Psoas muscle (tissue), 8 donors: ENCODE measurements at regions of chr17 and their contacts with region 1.

Region 1: DNA sequence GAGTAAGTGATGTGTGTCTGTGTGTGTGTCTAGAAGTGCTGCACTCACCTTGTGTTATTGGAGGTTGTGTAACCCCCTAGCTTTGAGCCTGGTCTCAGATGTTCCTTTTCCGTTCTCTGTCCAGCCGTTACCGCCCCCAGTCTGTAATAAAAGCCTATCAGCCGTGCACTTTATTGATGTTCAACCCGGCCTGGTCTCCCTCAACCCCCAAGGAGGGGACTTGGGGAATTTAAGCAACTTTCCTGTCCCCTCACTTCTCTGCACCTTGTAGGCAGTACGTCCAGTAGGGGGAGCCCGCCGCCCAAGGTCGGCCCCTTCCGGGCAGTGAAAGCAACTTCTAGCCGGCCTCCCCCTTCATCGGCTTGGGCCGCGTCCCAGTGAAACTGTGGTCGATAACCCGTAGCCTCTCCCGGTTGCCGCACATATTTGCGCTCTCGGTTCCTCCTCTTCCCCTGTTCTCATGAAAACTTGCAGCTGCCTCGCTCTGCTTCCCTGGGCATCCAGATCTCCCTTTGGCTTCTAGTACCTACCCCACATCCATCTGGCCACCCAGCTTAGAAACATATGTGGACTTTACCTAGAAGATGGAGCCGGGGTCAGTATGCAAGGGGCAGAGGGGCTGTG is 7.9 kb downstream of the PNPO start:
- DNase-seq: peak; percentile 89 to 91
- ATAC-seq: peak; percentile 70 to 83 (median 74)
- H3K4me3 ChIP-seq: peak overlapping the region; percentile 16
- H3K27ac ChIP-seq: peak overlapping the region; percentile 71
- H3K4me1 ChIP-seq: peaks cover 21% of the 10 kb centered on the region
- H3K27me3 ChIP-seq: no peaks in the 10 kb centered on the region
- CTCF ChIP-seq: peak; percentile 90

Region 2: GRCh38 chr17:47831003-47831933 is 118.0 kb before region 1 on chr17 and contains the starts of genes LRRC46 and MRPL10:
- intact Hi-C with region 1: loop called in 1 of 2 experiments (anchors 5 kb)
- DNase-seq: peak; percentile 91 to 96
- ATAC-seq: peak; percentile 97 to 99 (median 98)
- H3K4me3 ChIP-seq: peak within 1 kb of the TSS; percentile 93
- H3K27ac ChIP-seq: peak within 1 kb of the TSS; percentile 76
- H3K4me1 ChIP-seq: peaks cover 23% of the 10 kb centered on the region
- H3K27me3 ChIP-seq: no peaks in the 10 kb centered on the region
- CTCF ChIP-seq: no peak
- total RNA-seq, gene LRRC46: 0.15 to 0.54 TPM in 2 of 4 donors, not detected in the others
- total RNA-seq, gene MRPL10: 37.8 to 51.9 (median 46.3) TPM

Region 3: DNA sequence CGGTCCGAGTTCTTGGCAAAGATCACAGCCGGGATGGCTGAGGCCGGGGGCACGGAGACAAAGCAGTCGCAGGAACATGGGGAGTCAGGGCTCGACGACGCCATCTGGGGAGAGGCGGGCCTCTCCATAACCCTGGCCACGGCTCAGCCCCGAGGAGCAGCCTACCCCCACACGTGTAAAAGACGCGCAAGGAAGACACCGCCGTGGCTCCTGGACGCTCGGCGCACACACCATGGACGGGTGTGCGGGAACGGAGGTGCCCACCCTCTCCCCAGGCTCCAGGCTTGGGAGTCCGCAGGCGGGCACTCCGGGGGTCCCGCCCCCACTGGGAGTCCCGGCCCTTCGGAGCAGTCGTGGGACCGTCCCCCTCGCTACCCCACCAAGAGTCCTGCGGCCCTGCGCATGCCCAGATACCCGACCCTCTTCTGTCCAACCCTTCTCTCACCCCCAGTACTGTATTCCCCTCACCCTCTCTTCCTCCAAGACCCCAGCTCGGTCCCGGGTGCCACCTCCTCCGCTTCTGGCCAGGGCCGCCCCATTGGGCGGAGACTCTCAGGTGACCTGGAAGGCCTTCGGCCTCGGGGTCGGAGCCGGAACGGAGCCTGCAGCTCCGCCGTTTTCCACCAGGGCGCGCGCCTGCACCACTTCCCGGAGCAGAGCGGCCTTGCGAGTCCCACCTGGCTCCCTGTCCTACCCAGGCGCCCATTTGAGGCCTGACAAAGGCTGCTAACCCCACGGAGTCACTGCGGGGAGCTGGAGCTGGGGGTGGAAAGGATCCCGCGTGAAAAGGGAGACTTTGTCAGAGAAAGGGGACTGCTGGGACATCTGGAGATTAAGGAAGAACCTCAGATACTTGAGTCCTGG is 108.3 kb before region 1 on chr17 and contains the start of gene SCRN2:
- intact Hi-C with region 1: loop called in 1 of 2 experiments (anchors 2 kb)
- DNase-seq: peak; percentile 89 to 96
- ATAC-seq: peak; percentile 96 to 99 (median 98)
- H3K4me3 ChIP-seq: peak within 1 kb of the TSS; percentile 77
- H3K27ac ChIP-seq: peak within 1 kb of the TSS; percentile 65
- H3K4me1 ChIP-seq: peaks cover 13% of the 10 kb centered on the region
- H3K27me3 ChIP-seq: peaks cover 0 to 7% (median 0%) of the 10 kb centered on the region in 3 donors
- CTCF ChIP-seq: peak; percentile 96
- total RNA-seq, gene SCRN2: 12.2 to 33.5 (median 19.5) TPM

Region 4: DNA sequence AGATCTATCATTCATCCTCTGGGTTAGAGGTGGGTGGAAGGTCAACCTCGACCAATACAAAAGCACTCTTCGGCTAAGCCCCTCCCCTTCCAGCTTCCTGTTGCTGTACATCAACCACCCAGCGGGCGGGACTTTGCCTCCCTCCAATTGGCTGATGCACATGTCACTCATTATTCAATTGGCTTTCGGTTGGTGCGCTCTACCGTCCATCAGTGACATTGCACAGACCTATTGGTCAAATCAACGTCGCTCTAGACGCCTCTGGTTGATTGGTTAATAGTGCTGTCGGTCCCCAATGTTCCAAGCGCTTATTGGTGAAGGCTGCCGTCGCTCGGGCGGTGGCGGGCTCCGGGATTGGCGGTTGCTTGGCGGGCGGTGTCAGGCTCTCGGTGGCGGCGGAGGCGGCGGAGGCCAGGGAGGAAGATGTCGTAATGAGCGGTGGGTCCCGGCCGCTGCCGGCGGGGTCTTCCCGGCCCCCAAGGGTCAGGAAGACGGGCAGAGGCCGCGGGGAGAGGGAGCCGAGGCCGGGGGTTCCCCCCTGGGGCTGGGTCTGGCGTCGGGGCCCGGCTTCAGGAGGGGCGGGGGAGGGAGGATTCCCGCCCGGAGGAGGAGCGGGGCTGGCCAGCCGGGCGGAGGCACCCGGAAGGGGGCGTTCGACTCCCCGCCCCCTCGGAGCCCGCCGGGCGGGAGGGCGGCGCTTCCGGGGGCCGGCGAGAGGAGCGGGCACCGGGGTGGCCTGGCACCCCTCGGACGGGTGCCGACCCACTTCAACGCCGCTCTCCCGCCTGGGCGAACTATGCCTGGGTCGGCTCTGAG is 53.2 kb before region 1 on chr17 and contains the start of gene SP2:
- intact Hi-C with region 1: loop called in 1 of 2 experiments (anchors 5 kb)
- DNase-seq: peak; percentile 99
- ATAC-seq: peak; percentile 90 to 94 (median 92)
- H3K4me3 ChIP-seq: peak within 1 kb of the TSS; percentile 82
- H3K27ac ChIP-seq: peak within 1 kb of the TSS; percentile 97
- H3K4me1 ChIP-seq: peaks cover 51% of the 10 kb centered on the region
- H3K27me3 ChIP-seq: no peaks in the 10 kb centered on the region
- CTCF ChIP-seq: peak; percentile 7
- total RNA-seq, gene SP2: 10.8 to 16.1 (median 12.8) TPM

Region 5: DNA sequence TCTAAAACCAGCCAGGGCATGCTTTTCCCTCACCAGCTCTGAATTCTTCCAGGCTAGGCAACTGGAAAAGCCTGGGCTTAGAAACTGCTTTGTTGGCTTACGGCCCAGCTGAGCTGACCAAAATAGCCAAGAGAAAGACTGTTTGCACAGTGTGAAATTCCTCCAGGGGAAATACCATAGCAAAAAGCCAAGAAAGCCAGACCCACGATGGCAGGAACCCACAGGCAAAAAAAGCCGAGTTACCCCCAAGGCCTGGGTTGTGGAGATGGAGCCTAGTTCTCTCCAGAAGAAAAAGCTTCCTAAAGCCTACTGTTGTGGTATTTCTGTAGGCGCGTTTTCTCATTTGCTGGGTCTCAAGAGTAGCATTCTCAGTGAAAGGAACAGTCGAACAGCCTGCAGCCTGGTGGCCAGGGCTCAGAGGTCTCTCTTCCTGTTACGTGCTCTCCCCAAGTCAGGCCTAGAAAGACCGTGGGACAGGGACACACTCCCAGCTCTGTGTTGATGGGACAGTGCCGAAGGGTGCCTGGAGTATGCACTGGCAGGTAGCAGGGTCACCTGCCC is 43.9 kb before region 1 on chr17:
- intact Hi-C with region 1: loop called in 1 of 2 experiments (anchors 5 kb)
- DNase-seq: peak; percentile 72 to 88
- ATAC-seq: peak; percentile 52 to 71 (median 64)
- H3K4me3 ChIP-seq: peak overlapping the region; percentile 45
- H3K27ac ChIP-seq: peak overlapping the region; percentile 88
- H3K4me1 ChIP-seq: peaks cover 82% of the 10 kb centered on the region
- H3K27me3 ChIP-seq: no peaks in the 10 kb centered on the region
- CTCF ChIP-seq: no peak

Region 6: DNA sequence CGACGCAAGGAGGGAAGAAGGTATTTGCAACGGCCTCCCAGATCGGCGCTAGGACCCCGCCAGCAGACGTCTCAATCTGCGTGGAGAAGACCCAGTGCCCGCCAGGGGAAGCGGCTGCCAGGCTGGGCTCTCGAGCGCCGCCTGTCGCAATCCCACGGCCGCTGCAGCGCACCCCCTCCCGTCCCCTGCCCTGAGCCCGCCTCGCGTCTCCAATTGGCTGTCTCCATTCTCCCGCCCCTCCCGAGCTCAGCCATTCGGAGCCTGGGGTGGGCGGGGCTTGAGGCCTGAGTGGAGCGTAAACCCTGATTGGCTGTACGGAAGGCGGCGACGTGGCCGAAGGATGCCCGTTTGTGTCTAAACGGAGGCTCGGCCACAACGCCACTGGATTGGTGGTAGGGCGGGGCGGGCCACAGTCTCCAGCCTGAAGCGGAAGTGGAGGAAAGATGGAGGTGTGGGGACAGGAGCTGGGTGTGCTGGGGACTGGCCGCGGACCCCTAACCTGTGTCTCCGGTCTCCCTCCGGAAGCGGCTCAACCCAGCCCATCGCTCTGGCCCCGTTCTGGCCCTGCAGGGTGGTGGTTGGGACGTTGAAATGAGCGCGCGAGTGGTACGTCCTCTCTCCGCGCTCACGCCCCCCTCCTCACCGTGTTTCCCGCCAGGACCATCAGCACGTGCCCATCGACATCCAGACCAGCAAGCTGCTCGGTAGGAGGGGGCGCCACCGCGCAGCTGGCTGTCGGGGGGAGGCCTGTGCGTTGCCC is 21.6 kb after region 1 on chr17 and contains the start of gene CDK5RAP3:
- intact Hi-C with region 1: loop called (anchors 1 to 2 kb)
- DNase-seq: peak; percentile 100
- ATAC-seq: peak; percentile 99 to 100 (median 100)
- H3K4me3 ChIP-seq: peak within 1 kb of the TSS; percentile 95
- H3K27ac ChIP-seq: peak within 1 kb of the TSS; percentile 93
- H3K4me1 ChIP-seq: no peaks in the 10 kb centered on the region
- H3K27me3 ChIP-seq: no peaks in the 10 kb centered on the region
- CTCF ChIP-seq: peak; percentile 90
- total RNA-seq, gene CDK5RAP3: 21.0 to 44.1 (median 34.5) TPM